ENCODE measurements at regions of chr3 and their contacts with region 1.

Region 1: GRCh38 chr3:179322286-179323196 is at the start of gene ZNF639:
- DNase-seq: peak; percentile 81 to 91 (median 87)
- H3K4me3 ChIP-seq: peak within 1 kb of the TSS; percentile 65
- H3K4me3 Mint-ChIP-seq: peak within 1 kb of the TSS; percentile 89 to 95 (median 91)
- H3K27ac ChIP-seq: peak within 1 kb of the TSS; percentile 93
- H3K27ac Mint-ChIP-seq: peak within 1 kb of the TSS; percentile 93 to 99 (median 96)
- H3K4me1 ChIP-seq: peaks cover 21% of the 10 kb centered on the region
- H3K4me1 Mint-ChIP-seq: peaks cover 30 to 52% (median 41%) of the 10 kb centered on the region in 3 donors
- H3K27me3 ChIP-seq: no peaks in the 10 kb centered on the region
- H3K27me3 Mint-ChIP-seq: peaks cover 0 to 2% of the 10 kb centered on the region in 2 donors
- total RNA-seq, gene ZNF639: 41.9 to 44.5 TPM

Region 2: DNA sequence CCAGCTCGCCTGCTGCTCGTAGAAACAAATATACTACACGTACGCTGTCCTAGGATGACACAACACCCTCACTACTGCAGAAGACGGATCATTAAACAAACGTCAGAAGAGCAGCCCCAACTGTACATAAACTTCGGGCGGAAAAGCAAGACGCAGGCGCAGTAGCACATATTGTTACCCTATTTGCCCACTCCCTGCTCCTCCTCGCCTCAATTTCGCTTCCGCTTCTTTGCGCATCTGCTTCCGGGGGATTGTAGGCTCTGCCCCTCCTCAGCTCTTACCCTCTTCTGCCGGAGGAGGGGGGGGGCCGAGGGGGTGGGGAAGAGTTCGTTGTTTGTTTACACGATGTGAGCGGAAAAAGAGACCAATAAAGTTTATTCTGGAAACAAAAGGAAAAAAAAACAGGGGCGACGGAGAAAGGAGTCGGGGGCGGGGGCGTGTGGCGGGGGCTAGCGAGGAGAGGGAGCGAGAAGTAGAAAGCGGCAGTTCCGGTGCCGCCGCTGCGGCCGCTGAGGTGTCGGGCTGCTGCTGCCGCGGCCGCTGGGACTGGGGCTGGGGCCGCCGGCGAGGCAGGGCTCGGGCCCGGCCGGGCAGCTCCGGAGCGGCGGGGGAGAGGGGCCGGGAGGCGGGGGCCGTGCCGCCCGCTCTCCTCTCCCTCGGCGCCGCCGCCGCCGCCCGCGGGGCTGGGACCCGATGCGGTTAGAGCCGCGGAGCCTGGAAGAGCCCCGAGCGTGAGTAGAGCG is 174.5 kb before region 1 on chr3 and contains the start of gene PIK3CA:
- CTCF ChIA-PET with region 1: interaction called, 5 read pairs
- POLR2A ChIA-PET with region 1: interaction called, 27 read pairs
- DNase-seq: peak; percentile 89 to 98 (median 94)
- H3K4me3 ChIP-seq: peak within 1 kb of the TSS; percentile 90
- H3K4me3 Mint-ChIP-seq: peak within 1 kb of the TSS in 6 of 7 donors; percentile 92 to 97 (median 94)
- H3K27ac ChIP-seq: peak within 1 kb of the TSS; percentile 93
- H3K27ac Mint-ChIP-seq: peak within 1 kb of the TSS; percentile 93 to 99 (median 94)
- H3K4me1 ChIP-seq: peaks cover 29% of the 10 kb centered on the region
- H3K4me1 Mint-ChIP-seq: peaks cover 37 to 44% (median 43%) of the 10 kb centered on the region in 3 donors
- H3K27me3 ChIP-seq: no peaks in the 10 kb centered on the region
- H3K27me3 Mint-ChIP-seq: peaks cover 0 to 4% of the 10 kb centered on the region in 2 donors
- total RNA-seq, gene PIK3CA: 18.8 to 19.5 TPM

Region 3: GRCh38 chr3:179244878-179245277 is 77.7 kb before region 1 on chr3:
- CTCF ChIA-PET with region 1: no interaction called
- POLR2A ChIA-PET with region 1: no interaction called
- DNase-seq: no peak
- H3K4me3 ChIP-seq: no peak overlapping the region
- H3K4me3 Mint-ChIP-seq: no peak overlapping the region
- H3K27ac ChIP-seq: no peak overlapping the region
- H3K27ac Mint-ChIP-seq: no peak overlapping the region
- H3K4me1 ChIP-seq: no peaks in the 10 kb centered on the region
- H3K4me1 Mint-ChIP-seq: no peaks in the 10 kb centered on the region
- H3K27me3 ChIP-seq: no peaks in the 10 kb centered on the region
- H3K27me3 Mint-ChIP-seq: no peaks in the 10 kb centered on the region

Region 4: GRCh38 chr3:179347345-179348194 is 25.0 kb after region 1 on chr3 and contains the start of gene MFN1:
- CTCF ChIA-PET with region 1: interaction called, 11 read pairs
- POLR2A ChIA-PET with region 1: interaction called, 3 read pairs
- DNase-seq: peak; percentile 82 to 92 (median 87)
- H3K4me3 ChIP-seq: peak within 1 kb of the TSS; percentile 94
- H3K4me3 Mint-ChIP-seq: peak within 1 kb of the TSS; percentile 91 to 100 (median 99)
- H3K27ac ChIP-seq: peak within 1 kb of the TSS; percentile 81
- H3K27ac Mint-ChIP-seq: peak within 1 kb of the TSS; percentile 70 to 99 (median 97)
- H3K4me1 ChIP-seq: peaks cover 13% of the 10 kb centered on the region
- H3K4me1 Mint-ChIP-seq: peaks cover 28 to 46% (median 44%) of the 10 kb centered on the region in 3 donors
- H3K27me3 ChIP-seq: no peaks in the 10 kb centered on the region
- H3K27me3 Mint-ChIP-seq: no peaks in the 10 kb centered on the region
- total RNA-seq, gene MFN1: 36.5 to 36.8 TPM